Cardiac septum (tissue), 1 donor: ENCODE measurements at regions of chr10 and their contacts with region 1.

Region 1: DNA sequence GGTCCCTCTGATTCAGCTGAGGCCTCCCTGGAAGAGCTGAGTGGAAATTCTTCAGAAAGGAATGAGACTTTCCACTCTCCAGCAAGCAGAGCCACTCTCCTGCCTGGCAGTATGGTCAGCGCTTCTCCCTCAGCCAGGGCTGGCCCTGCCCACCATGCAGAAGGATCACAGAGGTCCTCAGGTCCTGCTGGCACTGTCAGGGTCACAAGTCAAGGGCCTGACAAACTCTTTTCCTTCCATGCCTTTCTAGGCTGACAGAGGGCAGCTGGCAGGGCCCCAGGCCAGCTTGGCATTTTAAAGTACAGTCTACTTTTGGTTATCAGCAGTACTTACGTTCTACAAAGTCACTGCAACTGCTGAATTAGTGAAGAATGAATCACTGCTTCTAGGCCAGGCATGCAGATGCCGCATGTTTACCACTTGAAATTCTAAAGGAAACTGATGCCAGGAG is 119.3 kb upstream of the FRMD4A start:
- DNase-seq: no peak

Region 2: GRCh38 chr10:14397066-14397465 is 53.0 kb before region 1 on chr10:
- intact Hi-C with region 1: loop called (anchors 2 kb)
- DNase-seq: peak; percentile 85